ENCODE measurements at regions of chr1 and their contacts with region 1.

Region 1: GRCh38 chr1:161792740-161793139 is 26.6 kb downstream of the ATF6 start:
- DNase-seq: no peak
- H3K4me3 ChIP-seq: no peak overlapping the region
- H3K27ac ChIP-seq: no peak overlapping the region
- H3K4me1 ChIP-seq: no peaks in the 10 kb centered on the region
- H3K27me3 ChIP-seq: no peaks in the 10 kb centered on the region
- CTCF ChIP-seq: peak; percentile 69

Region 2: DNA sequence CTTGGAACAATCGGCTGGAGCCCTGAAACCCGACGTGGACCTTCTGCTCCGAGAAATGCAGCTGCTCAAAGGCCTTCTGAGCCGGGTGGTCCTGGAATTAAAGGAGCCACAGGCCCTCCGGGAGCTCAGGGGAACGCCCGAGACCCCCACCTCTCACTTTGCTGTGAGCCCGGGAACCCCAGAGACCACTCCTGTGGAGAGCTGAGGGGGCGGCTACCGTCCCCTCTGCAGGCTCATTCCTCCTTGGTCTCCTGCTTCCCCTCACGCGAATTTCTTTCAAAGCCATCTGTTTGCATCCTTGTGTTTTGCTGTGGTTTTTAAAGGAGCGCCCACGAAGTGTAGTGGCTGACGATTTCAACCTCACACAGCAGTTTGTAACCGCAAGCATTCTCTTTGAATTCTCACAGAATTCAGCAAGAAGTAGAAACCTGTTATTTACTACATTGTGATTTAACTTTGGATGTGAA is 65.2 kb before region 1 on chr1:
- intact Hi-C with region 1: no loop called
- DNase-seq: no peak
- H3K4me3 ChIP-seq: peak overlapping the region; percentile 97
- H3K27ac ChIP-seq: peak overlapping the region; percentile 94
- H3K4me1 ChIP-seq: peaks cover 24% of the 10 kb centered on the region
- H3K27me3 ChIP-seq: peaks cover 11% of the 10 kb centered on the region
- CTCF ChIP-seq: no peak

Region 3: DNA sequence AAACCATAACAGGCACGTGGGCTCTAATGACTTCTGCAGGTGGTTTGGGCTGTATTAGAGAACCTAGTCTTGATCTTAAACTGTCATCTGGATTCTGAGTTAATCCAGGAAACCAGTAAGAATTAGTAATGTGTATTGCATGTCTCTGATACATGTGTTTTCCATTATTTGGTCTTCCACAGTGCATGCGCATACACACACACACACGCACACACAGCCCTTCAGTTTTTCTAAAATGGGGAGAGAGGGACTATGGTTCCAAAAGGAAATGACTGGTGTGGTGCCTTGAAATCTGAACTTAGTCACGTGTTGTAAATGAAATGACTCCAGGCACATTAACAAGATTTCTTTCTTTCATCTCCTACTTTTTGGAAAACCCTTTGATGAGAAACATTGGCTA is 163.4 kb after region 1 on chr1:
- intact Hi-C with region 1: no loop called
- DNase-seq: no peak
- H3K4me3 ChIP-seq: no peak overlapping the region
- H3K27ac ChIP-seq: no peak overlapping the region
- H3K4me1 ChIP-seq: peaks cover 3% of the 10 kb centered on the region
- H3K27me3 ChIP-seq: no peaks in the 10 kb centered on the region
- CTCF ChIP-seq: no peak

Region 4: DNA sequence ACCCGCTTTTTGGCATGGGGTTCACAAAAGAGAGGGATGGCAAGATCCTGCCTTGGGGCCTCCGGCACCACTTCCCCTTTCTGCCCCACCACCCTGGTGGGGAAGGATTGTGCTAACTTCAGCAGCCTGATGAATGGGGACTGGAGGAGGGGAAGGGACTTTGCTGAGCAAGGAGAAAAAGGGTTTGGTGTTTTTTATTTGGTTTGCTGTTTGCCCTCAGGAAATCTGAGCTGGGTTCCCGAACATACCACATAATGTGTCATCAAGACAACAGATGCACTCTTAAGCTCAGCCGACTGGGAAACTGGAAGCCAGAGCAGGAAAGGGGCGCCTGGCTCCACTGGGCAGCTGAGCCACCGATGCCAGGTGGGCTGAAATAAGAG is 211.1 kb after region 1 on chr1:
- intact Hi-C with region 1: no loop called
- DNase-seq: no peak
- H3K4me3 ChIP-seq: no peak overlapping the region
- H3K27ac ChIP-seq: peak overlapping the region; percentile 45
- H3K4me1 ChIP-seq: peaks cover 11% of the 10 kb centered on the region
- H3K27me3 ChIP-seq: no peaks in the 10 kb centered on the region
- CTCF ChIP-seq: no peak

Region 5: DNA sequence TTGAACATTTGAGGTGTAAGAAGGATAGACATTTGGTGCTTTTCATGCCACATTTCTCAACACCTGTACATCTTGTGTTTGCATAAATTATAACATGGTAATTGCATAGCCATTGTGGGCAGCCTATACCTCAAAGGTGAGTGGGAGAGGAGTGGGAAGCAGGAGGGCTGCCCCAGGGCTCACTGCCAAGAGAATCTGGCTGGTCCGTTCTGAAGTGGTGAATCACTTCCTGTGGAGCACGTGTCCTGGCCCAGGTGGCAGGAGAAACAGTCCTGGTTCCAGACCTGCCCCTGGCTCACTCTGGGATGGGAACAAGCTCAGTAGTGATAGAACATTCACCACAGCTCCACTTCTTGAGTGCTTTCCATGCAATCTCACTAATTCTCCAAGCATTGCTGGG is 242.5 kb after region 1 on chr1:
- intact Hi-C with region 1: loop called (anchors 5 kb)
- DNase-seq: no peak
- H3K4me3 ChIP-seq: no peak overlapping the region
- H3K27ac ChIP-seq: no peak overlapping the region
- H3K4me1 ChIP-seq: peaks cover 11% of the 10 kb centered on the region
- H3K27me3 ChIP-seq: no peaks in the 10 kb centered on the region
- CTCF ChIP-seq: no peak

Measured in left ventricle myocardium inferior (tissue), 1 donor.